ENCODE measurements at regions of chr1 and their contacts with region 1.

Region 1: GRCh38 chr1:147172168-147172992 is at the start of gene PRKAB2:
- DNase-seq: peak; percentile 95 to 98 (median 96)
- ATAC-seq: peak; percentile 91 to 96 (median 92)
- H3K4me3 ChIP-seq: peak within 1 kb of the TSS; percentile 80 to 94 (median 90)
- H3K27ac ChIP-seq: peak within 1 kb of the TSS; percentile 78 to 96 (median 87)
- H3K4me1 ChIP-seq: peaks cover 26 to 46% (median 33%) of the 10 kb centered on the region in 3 donors
- H3K27me3 ChIP-seq: no peaks in the 10 kb centered on the region
- CTCF ChIP-seq: peak; percentile 90 to 96 (median 95)
- total RNA-seq, gene PRKAB2: 6.3 to 15.1 (median 12.3) TPM

Region 2: GRCh38 chr1:147242439-147243227 is 70.3 kb after region 1 on chr1 and contains the start of gene CHD1L:
- intact Hi-C with region 1: loop called in 2 of 3 experiments (anchors 2 to 5 kb)
- DNase-seq: peak; percentile 94 to 98 (median 96)
- ATAC-seq: peak; percentile 93 to 96 (median 94)
- H3K4me3 ChIP-seq: peak within 1 kb of the TSS; percentile 33 to 97 (median 74)
- H3K27ac ChIP-seq: peak within 1 kb of the TSS; percentile 39 to 88 (median 74)
- H3K4me1 ChIP-seq: peaks cover 12 to 37% (median 35%) of the 10 kb centered on the region in 3 donors
- H3K27me3 ChIP-seq: no peaks in the 10 kb centered on the region
- CTCF ChIP-seq: peak; percentile 69 to 92 (median 76)
- total RNA-seq, gene CHD1L: 6.6 to 17.0 (median 11.8) TPM

Region 3: DNA sequence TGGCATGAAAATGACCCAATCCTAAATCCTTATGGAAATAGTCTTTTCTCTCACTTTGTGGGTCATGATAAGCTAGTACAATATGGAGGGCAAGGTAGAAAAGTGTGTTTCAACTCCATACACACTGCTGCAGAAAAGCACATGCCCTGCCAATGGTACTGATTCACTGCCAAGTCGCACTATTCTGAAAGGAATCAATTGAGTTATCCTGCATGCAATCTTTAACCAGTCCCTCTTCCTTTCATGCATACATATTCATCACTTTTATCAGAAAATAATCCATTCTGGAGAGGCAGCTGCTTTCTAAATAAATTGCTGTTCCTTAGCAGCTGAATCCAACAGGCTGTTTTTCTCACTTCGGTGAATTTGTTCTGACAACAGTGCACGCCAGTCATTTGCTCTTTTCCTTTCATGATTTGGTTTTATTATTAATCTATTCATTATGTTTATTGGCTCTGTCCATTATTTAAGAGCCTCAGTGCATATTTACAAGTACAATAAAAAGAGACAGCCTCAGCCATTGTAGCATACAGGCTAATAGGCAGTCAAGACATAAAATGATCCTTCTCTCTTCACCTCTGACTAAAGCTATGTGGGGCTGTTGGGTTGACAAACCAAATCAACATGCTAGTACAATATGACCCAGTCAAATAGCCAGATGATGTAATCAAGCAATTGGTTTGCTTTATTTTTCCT is 178.9 kb after region 1 on chr1:
- intact Hi-C with region 1: no loop called
- DNase-seq: no peak
- ATAC-seq: no peak
- H3K4me3 ChIP-seq: no peak overlapping the region
- H3K27ac ChIP-seq: no peak overlapping the region
- H3K4me1 ChIP-seq: no peaks in the 10 kb centered on the region
- H3K27me3 ChIP-seq: peaks cover 0 to 8% (median 0%) of the 10 kb centered on the region in 4 donors
- CTCF ChIP-seq: no peak